GM10248 (cell line): ENCODE measurements at regions of chr3 and their contacts with region 1.

Region 1: DNA sequence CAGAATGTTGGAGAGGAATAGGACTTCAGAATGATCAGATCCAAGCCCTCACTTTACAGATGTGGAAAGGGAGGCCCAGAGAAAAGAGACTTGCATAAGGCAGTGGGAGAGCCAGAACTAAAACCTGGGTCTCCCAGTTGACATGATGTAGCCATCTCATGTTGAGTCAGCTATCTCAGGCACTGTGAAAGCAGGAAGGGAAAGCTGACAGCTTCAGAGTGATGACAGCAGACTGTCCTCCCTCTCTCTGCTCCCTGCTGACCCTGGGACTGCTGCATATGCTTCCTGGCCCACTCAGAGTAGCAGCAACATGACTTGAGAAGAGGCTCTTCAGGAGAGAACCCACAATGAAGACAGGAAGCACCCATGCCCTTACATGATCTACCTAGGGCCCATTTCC is 14.7 kb downstream of the FHIT start:
- DNase-seq: peak; percentile 54
- CTCF ChIP-seq: no peak

Region 2: DNA sequence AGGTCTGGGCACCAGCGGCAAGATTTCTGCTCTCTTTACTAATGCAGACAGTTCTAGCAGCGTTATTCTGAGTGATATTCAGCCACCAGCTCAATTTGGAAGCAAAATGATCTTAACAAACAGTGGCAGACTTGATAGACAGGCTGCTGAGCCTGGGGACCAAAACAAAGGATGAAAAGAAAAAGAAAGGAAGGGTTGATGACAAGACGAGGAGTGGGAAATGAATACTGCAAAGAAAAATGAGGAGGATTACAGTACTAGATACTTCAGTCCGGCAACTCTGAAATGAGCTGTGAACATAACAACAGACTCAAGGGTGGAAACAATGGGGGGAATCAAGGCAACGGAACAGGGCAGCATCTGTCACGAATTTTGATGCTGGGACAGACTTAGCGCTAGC is 14.1 kb before region 1 on chr3:
- CTCF ChIA-PET with region 1: interaction called, 12 read pairs
- POLR2A ChIA-PET with region 1: no interaction called
- DNase-seq: no peak
- CTCF ChIP-seq: no peak

Region 3: DNA sequence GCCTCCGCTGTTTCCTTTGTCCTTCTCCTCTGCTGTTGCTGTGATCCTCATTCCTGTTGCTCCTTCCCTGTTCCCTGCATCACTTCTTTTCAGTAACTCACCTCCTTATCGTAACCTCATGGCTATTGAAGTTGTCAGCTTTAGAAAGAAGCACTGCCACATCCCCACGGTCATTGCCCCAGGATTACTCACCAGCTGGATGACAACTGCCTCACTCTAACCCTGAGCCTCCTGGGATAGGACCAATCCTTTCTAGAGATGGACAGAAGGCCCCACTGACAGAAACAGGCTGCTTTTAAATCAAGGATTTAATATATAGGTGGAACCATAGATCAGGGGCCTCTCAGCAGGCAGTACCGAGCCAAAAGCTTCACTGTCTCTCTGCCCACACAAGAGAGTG is 10.6 kb after region 1 on chr3:
- CTCF ChIA-PET with region 1: interaction called, 18 read pairs
- POLR2A ChIA-PET with region 1: no interaction called
- DNase-seq: no peak
- CTCF ChIP-seq: no peak